OCI-LY7 (cell line): ENCODE measurements at regions of chr2 and their contacts with region 1.

Region 1: GRCh38 chr2:10408649-10409579 is 39.2 kb downstream of the ODC1 start:
- DNase-seq: peak; percentile 88
- H3K4me3 ChIP-seq: peak overlapping the region; percentile 50
- H3K27ac ChIP-seq: peak overlapping the region; percentile 90
- H3K4me1 ChIP-seq: peaks cover 63% of the 10 kb centered on the region
- CTCF ChIP-seq: peak; percentile 97

Region 2: GRCh38 chr2:10122386-10123280 is 286.3 kb before region 1 on chr2 and contains the start of gene RRM2:
- CTCF ChIA-PET with region 1: no interaction called
- POLR2A ChIA-PET with region 1: interaction called, 3 read pairs
- intact Hi-C with region 1: loop called (anchors 2 kb)
- DNase-seq: peak; percentile 97
- H3K4me3 ChIP-seq: peak within 1 kb of the TSS; percentile 81
- H3K27ac ChIP-seq: peak within 1 kb of the TSS; percentile 91
- H3K4me1 ChIP-seq: peaks cover 54% of the 10 kb centered on the region
- CTCF ChIP-seq: no peak
- total RNA-seq, gene RRM2: 181 and 222 TPM in 2 replicates

Region 3: GRCh38 chr2:10225291-10226037 is 183.4 kb before region 1 on chr2:
- CTCF ChIA-PET with region 1: interaction called, 4 read pairs
- POLR2A ChIA-PET with region 1: no interaction called
- intact Hi-C with region 1: loop called (anchors 2 kb)
- DNase-seq: no peak
- H3K4me3 ChIP-seq: no peak overlapping the region
- H3K27ac ChIP-seq: no peak overlapping the region
- H3K4me1 ChIP-seq: peaks cover 5% of the 10 kb centered on the region
- CTCF ChIP-seq: no peak

Region 4: GRCh38 chr2:10302479-10303180 is 106.3 kb before region 1 on chr2 and contains the start of gene HPCAL1:
- CTCF ChIA-PET with region 1: interaction called, 14 read pairs
- POLR2A ChIA-PET with region 1: interaction called, 4 read pairs
- intact Hi-C with region 1: loop called (anchors 1 kb)
- DNase-seq: peak; percentile 92
- H3K4me3 ChIP-seq: peak within 1 kb of the TSS; percentile 74
- H3K27ac ChIP-seq: peak within 1 kb of the TSS; percentile 41
- H3K4me1 ChIP-seq: peaks cover 25% of the 10 kb centered on the region
- CTCF ChIP-seq: peak; percentile 64
- total RNA-seq, gene HPCAL1: 9.1 and 9.7 TPM in 2 replicates

Region 5: GRCh38 chr2:10331027-10331701 is 77.8 kb before region 1 on chr2:
- CTCF ChIA-PET with region 1: interaction called, 9 read pairs
- POLR2A ChIA-PET with region 1: interaction called, 22 read pairs
- intact Hi-C with region 1: no loop called
- DNase-seq: peak; percentile 70
- H3K4me3 ChIP-seq: peak overlapping the region; percentile 62
- H3K27ac ChIP-seq: peak overlapping the region; percentile 53
- H3K4me1 ChIP-seq: peaks cover 73% of the 10 kb centered on the region
- CTCF ChIP-seq: no peak; the same call in 1 of the 2 replicates

Region 6: GRCh38 chr2:10382354-10383061 is 26.4 kb before region 1 on chr2:
- CTCF ChIA-PET with region 1: interaction called, 20 read pairs
- POLR2A ChIA-PET with region 1: interaction called, 9 read pairs
- intact Hi-C with region 1: loop called (anchors 1 kb)
- DNase-seq: peak; percentile 85
- H3K4me3 ChIP-seq: peak overlapping the region; percentile 50
- H3K27ac ChIP-seq: peak overlapping the region; percentile 25
- H3K4me1 ChIP-seq: peaks cover 69% of the 10 kb centered on the region
- CTCF ChIP-seq: no peak

Region 7: DNA sequence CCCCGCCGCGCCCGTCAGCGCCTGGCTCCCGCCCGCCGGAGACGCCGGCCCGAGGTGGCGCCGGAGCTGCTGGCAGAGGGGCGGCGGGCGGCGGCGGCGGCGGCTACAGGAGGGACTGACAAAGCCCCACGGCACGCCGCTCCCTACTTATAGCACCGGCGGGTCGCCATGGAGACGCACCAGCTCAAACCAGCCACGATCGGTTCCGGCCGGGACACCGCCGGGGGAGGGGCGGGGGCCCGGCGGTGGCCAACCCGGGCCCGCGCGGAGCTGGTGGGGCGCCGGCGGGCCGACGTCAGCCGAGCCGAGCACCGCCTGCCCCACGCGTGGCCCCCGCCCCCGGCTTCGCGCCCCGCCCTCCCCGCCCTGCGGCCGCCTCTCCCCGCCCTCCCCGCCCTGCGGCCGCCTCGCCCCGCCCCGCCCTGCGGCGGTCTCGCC is 39.3 kb after region 1 on chr2 and contains the start of gene ODC1:
- CTCF ChIA-PET with region 1: interaction called, 3 read pairs
- POLR2A ChIA-PET with region 1: interaction called, 11 read pairs
- intact Hi-C with region 1: no loop called
- DNase-seq: peak; percentile 94
- H3K4me3 ChIP-seq: peak within 1 kb of the TSS; percentile 88
- H3K27ac ChIP-seq: peak within 1 kb of the TSS; percentile 85
- H3K4me1 ChIP-seq: peaks cover 26% of the 10 kb centered on the region
- CTCF ChIP-seq: no peak
- total RNA-seq, gene ODC1: 273 and 306 TPM in 2 replicates

Region 8: DNA sequence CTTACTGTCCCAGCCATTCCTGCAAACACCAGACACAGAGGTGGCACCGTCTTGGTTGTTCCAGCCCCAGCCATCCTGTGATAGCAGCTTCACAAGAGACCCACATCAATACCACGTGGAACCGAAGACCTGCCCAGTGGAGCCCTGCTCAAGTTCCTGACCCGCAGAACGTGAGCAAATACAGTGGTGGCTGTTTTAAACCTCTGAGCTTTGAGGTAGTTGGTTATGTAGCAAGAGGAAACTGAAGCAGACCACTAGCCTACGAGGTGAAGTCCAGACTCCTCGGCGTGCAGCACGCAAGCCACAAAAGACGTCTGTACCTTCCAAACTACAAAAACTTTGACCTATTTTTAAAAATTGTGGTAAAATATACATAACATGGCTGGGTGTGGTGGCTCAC is 135.3 kb after region 1 on chr2:
- CTCF ChIA-PET with region 1: no interaction called
- POLR2A ChIA-PET with region 1: no interaction called
- intact Hi-C with region 1: no loop called
- DNase-seq: no peak
- H3K4me3 ChIP-seq: no peak overlapping the region
- H3K27ac ChIP-seq: no peak overlapping the region
- H3K4me1 ChIP-seq: no peaks in the 10 kb centered on the region
- CTCF ChIP-seq: no peak